Right cardiac atrium (tissue), 5 donors: ENCODE measurements at regions of chr2 and their contacts with region 1.

Region 1: GRCh38 chr2:64562148-64562784 is 38.1 kb downstream of the AFTPH start:
- DNase-seq: no peak
- ATAC-seq: peak in 1 of 2 donors; percentile 29
- H3K4me3 ChIP-seq: no peak overlapping the region
- H3K27ac ChIP-seq: no peak overlapping the region
- H3K4me1 ChIP-seq: no peaks in the 10 kb centered on the region
- H3K27me3 ChIP-seq: no peaks in the 10 kb centered on the region

Region 2: DNA sequence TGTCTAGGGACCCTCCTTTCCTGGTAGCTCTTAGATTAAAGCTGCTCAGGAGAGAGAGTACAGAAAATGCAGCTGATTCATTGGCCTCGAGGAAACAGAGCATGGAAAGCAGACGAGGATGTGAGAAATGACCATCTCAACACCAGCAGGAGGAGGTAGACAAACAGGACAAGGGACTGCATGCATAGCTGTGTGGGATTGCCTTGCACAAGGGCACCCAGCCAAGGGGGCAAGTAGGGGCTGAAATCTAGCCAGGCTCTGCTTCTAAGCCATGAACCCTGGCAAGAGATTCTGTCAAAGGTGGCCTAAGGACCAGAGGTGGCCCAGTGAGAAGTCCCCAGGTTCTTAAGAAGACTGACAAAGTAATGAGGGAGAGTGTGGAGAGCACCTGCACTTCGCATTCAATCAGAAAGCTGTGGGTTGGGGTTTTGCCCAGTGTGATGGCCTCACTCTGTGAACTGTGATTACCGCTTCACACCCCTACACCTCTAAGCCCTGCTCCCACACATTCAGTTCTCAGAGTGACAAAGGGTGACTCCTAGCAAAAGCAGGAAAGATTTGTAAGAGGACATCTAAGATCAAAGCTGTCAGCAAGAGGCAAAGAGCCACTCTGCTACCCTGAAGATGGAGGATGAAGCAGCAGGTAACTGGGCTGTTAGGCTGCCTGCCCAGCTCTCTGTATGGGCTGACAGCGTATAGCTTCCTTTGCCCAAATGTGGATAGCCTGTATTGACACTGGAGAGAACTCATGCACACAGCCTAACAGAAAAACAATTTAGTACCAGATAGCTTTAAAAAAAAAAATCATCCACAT is 266.7 kb before region 1 on chr2:
- intact Hi-C with region 1: no loop called
- DNase-seq: no peak
- ATAC-seq: no peak
- H3K4me3 ChIP-seq: no peak overlapping the region
- H3K27ac ChIP-seq: no peak overlapping the region
- H3K4me1 ChIP-seq: no peaks in the 10 kb centered on the region
- H3K27me3 ChIP-seq: peaks cover 3% of the 10 kb centered on the region

Region 3: GRCh38 chr2:64338910-64339500 is 223.3 kb before region 1 on chr2:
- intact Hi-C with region 1: loop called (anchors 5 to 10 kb)
- DNase-seq: no peak
- ATAC-seq: no peak
- H3K4me3 ChIP-seq: no peak overlapping the region
- H3K27ac ChIP-seq: no peak overlapping the region
- H3K4me1 ChIP-seq: no peaks in the 10 kb centered on the region
- H3K27me3 ChIP-seq: no peaks in the 10 kb centered on the region

Region 4: GRCh38 chr2:64523666-64524603 is 38.3 kb before region 1 on chr2 and contains the start of gene AFTPH:
- intact Hi-C with region 1: loop called in 1 of 4 experiments (anchors 5 kb)
- DNase-seq: peak; percentile 99 to 100 (median 99)
- ATAC-seq: peak; percentile 99 to 100
- H3K4me3 ChIP-seq: peak within 1 kb of the TSS; percentile 72
- H3K27ac ChIP-seq: peak within 1 kb of the TSS; percentile 84
- H3K4me1 ChIP-seq: no peaks in the 10 kb centered on the region
- H3K27me3 ChIP-seq: no peaks in the 10 kb centered on the region
- total RNA-seq, gene AFTPH: 12.4 to 16.3 (median 14.6) TPM